Naive thymus-derived CD4-positive, alpha-beta T cell (primary cell): ENCODE measurements at regions of chr12 and their contacts with region 1.

Region 1: GRCh38 chr12:108562348-108563135 is at the start of gene ISCU:
- DNase-seq: peak; percentile 97 to 100 (median 99)
- ATAC-seq: peak; percentile 84
- H3K4me3 ChIP-seq: peak within 1 kb of the TSS; percentile 96
- H3K4me3 Mint-ChIP-seq: peak within 1 kb of the TSS; percentile 94 to 100 (median 100)
- H3K27ac ChIP-seq: peak within 1 kb of the TSS; percentile 98
- H3K27ac Mint-ChIP-seq: peak within 1 kb of the TSS; percentile 98 to 100 (median 99)
- H3K4me1 ChIP-seq: peaks cover 27 to 46% of the 10 kb centered on the region in 2 donors
- H3K4me1 Mint-ChIP-seq: peaks cover 26 to 76% (median 63%) of the 10 kb centered on the region in 7 donors
- H3K27me3 ChIP-seq: no peaks in the 10 kb centered on the region
- H3K27me3 Mint-ChIP-seq: no peaks in the 10 kb centered on the region
- total RNA-seq, gene ISCU: 51.7 to 212 (median 191) TPM

Region 2: DNA sequence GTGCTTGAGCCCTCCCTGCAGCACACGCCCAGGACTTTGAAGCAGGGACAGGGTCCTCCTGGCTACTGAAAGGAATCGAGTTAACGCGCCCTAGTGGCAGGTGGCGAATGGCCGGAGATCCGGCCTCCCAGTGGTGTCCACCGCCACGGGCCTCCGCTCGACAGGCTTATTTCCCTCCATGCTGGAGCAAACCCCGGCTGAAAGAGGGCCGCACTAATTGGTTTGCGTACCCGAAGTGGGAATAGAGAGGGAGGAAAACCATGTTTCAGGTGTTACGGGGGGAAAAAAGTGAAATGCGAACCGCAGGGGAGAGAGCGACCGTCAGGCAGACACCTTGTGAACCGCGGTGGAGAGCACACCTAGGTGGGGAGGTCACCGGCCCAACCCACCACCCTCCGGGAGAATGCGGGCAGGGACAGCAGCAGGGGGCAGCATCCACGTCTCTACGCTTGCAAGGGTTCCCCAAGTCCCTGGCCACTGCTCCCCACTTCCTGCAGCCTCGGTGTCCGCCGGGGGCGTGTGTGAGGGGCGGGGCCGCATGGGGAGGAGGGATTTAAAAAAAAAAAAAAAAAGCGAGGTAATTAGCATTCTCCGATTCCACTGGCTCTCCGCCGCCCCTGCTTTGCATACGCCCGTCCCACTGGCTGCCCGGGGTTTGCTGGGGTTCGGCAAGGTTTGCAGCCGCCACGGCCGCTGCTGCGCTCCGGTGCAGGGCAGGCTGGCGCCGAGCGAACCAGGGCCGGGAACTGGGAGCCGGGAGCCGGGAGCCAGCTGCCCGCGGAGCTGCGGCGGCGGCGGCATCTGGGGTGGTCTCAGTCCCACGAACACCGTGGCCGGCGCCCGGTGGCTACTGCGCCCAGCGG is 1244.6 kb before region 1 on chr12:
- CTCF ChIA-PET with region 1: no interaction called
- POLR2A ChIA-PET with region 1: no interaction called
- intact Hi-C with region 1: loop called in 1 of 2 experiments (anchors 2 kb)
- DNase-seq: peak; percentile 67 to 89 (median 85)
- ATAC-seq: peak; percentile 78
- H3K4me3 ChIP-seq: peak overlapping the region; percentile 66
- H3K4me3 Mint-ChIP-seq: peak overlapping the region; percentile 84 to 98 (median 88)
- H3K27ac ChIP-seq: peak overlapping the region; percentile 89
- H3K27ac Mint-ChIP-seq: peak overlapping the region; percentile 34 to 89 (median 62)
- H3K4me1 ChIP-seq: peaks cover 12 to 21% of the 10 kb centered on the region in 2 donors
- H3K4me1 Mint-ChIP-seq: peaks cover 11 to 38% (median 28%) of the 10 kb centered on the region in 7 donors
- H3K27me3 ChIP-seq: no peaks in the 10 kb centered on the region
- H3K27me3 Mint-ChIP-seq: peaks cover 0 to 39% (median 0%) of the 10 kb centered on the region in 5 donors

Region 3: DNA sequence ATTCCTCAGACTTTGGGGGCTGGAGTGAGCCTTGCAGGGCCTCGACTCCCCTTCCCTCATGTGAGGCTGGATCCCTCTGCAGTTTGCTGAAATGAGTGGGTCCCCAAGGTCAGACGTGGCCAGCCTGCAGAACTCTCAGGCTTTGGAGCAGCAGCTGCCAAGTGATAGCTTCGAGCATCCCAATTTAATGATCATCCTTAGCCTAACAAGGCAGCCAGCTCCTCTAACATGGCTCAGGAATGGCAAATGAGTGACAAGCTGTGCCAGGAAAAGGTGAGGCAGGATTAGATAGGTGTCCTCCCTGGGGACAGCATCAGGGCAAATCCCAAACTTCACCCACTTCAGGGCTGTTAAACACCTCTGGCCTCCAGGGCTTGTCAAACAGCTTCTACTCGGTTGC is 1007.6 kb before region 1 on chr12:
- CTCF ChIA-PET with region 1: no interaction called
- POLR2A ChIA-PET with region 1: no interaction called
- intact Hi-C with region 1: no loop called
- DNase-seq: no peak
- ATAC-seq: no peak
- H3K4me3 ChIP-seq: no peak overlapping the region
- H3K4me3 Mint-ChIP-seq: no peak overlapping the region
- H3K27ac ChIP-seq: no peak overlapping the region
- H3K27ac Mint-ChIP-seq: no peak overlapping the region
- H3K4me1 ChIP-seq: no peaks in the 10 kb centered on the region
- H3K4me1 Mint-ChIP-seq: peaks cover 0 to 13% (median 0%) of the 10 kb centered on the region in 7 donors
- H3K27me3 ChIP-seq: no peaks in the 10 kb centered on the region
- H3K27me3 Mint-ChIP-seq: no peaks in the 10 kb centered on the region

Region 4: DNA sequence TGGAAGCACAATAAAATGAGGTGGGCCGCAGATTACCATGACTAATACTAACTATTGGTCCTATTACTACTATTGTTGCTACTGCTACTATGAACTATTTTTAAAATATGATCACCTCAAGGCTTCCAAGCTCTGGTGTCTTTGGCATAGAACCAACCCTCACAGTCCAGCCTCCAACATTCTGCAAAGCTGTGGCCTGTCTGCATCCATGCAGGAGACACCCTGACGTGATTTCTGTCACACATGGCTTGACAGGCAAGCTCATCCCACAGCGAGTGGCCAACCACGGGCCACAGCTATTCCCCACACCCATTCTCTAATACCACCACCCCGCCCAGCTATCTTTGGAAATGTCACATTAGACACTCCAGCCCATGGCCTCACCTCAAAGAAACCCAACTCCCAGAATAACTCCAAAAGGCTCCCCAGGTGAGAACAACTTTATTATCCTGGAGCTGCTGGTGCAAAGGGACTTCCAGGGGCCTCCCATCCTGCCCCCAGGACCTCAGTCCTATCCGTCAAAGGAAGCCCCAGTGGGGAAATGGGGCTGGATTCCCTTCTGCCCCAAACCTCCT is 14.2 kb after region 1 on chr12:
- CTCF ChIA-PET with region 1: interaction called, 5 read pairs
- POLR2A ChIA-PET with region 1: interaction called, 10 read pairs
- intact Hi-C with region 1: no loop called
- DNase-seq: no peak
- ATAC-seq: no peak
- H3K4me3 ChIP-seq: no peak overlapping the region
- H3K4me3 Mint-ChIP-seq: peak overlapping the region in 2 of 10 donors; percentile 19 to 75
- H3K27ac ChIP-seq: no peak overlapping the region
- H3K27ac Mint-ChIP-seq: peak overlapping the region in 6 of 9 donors; percentile 54 to 91 (median 84)
- H3K4me1 ChIP-seq: peaks cover 0 to 24% of the 10 kb centered on the region in 2 donors
- H3K4me1 Mint-ChIP-seq: peaks cover 18 to 61% (median 54%) of the 10 kb centered on the region in 7 donors
- H3K27me3 ChIP-seq: no peaks in the 10 kb centered on the region
- H3K27me3 Mint-ChIP-seq: peaks cover 0 to 8% (median 0%) of the 10 kb centered on the region in 5 donors

Region 5: DNA sequence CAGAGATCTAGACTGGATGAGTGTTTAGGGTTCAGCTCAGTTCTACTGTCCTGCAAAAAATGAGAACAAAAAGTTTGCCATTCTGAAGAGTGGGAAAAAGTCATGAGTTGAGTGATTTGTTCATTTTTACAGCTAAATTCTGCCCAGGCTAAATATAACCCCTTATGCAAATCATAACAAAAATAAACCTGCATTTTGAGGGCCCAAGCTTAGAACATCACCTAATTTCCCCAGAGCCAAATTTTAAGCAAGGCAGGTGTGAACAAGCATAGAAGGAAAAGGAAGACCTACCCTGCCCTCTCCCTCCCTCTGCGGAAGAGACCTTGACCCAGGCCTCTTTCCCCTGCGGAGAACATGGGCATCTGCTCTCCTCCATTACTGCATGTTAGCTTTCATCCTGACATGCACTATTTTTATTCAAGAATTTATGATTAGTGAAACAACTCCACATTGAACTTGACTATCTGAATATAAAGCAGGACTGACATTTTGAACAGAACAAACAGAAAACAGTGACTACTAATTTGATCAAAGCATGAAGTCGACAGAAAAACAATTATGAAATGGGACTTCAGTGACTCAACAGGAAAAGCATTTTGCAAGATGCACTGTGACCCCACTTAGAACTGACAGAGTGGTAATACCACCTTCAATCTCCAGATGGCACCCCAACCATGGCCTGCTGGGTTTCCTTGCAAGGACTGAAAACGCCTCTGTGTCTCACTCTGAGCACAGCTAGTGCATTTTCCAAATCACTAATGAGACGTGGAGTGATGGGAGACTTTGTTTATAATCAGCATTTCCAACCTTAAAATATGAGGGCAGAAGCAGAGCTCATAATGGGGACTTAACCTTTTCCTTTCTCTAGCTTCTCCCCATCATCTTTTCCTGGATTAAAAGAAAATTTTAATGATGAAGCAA is 102.1 kb after region 1 on chr12:
- CTCF ChIA-PET with region 1: interaction called, 20 read pairs
- POLR2A ChIA-PET with region 1: interaction called, 5 read pairs
- intact Hi-C with region 1: loop called (anchors 1 kb)
- DNase-seq: peak; percentile 35 to 83 (median 78)
- ATAC-seq: peak; percentile 97
- H3K4me3 ChIP-seq: no peak overlapping the region
- H3K4me3 Mint-ChIP-seq: peak overlapping the region in 1 of 10 donors; percentile 24
- H3K27ac ChIP-seq: no peak overlapping the region
- H3K27ac Mint-ChIP-seq: peak overlapping the region in 8 of 9 donors; percentile 8 to 84 (median 75)
- H3K4me1 ChIP-seq: peaks cover 0 to 3% of the 10 kb centered on the region in 2 donors
- H3K4me1 Mint-ChIP-seq: peaks cover 5 to 17% (median 12%) of the 10 kb centered on the region in 7 donors
- H3K27me3 ChIP-seq: no peaks in the 10 kb centered on the region
- H3K27me3 Mint-ChIP-seq: no peaks in the 10 kb centered on the region

Region 6: GRCh38 chr12:108856428-108857157 is 294.1 kb after region 1 on chr12:
- CTCF ChIA-PET with region 1: no interaction called
- POLR2A ChIA-PET with region 1: interaction called, 7 read pairs
- intact Hi-C with region 1: loop called (anchors 1 kb)
- DNase-seq: peak; percentile 35 to 77 (median 54)
- ATAC-seq: peak; percentile 68
- H3K4me3 ChIP-seq: peak overlapping the region; percentile 84
- H3K4me3 Mint-ChIP-seq: peak overlapping the region; percentile 89 to 97 (median 94)
- H3K27ac ChIP-seq: peak overlapping the region; percentile 62
- H3K27ac Mint-ChIP-seq: peak overlapping the region; percentile 76 to 99 (median 92)
- H3K4me1 ChIP-seq: peaks cover 18 to 23% of the 10 kb centered on the region in 2 donors
- H3K4me1 Mint-ChIP-seq: peaks cover 26 to 56% (median 47%) of the 10 kb centered on the region in 7 donors
- H3K27me3 ChIP-seq: no peaks in the 10 kb centered on the region
- H3K27me3 Mint-ChIP-seq: peaks cover 0 to 2% (median 0%) of the 10 kb centered on the region in 5 donors

Region 7: GRCh38 chr12:109110988-109111495 is 548.5 kb after region 1 on chr12:
- CTCF ChIA-PET with region 1: no interaction called
- POLR2A ChIA-PET with region 1: no interaction called
- intact Hi-C with region 1: loop called in 1 of 2 experiments (anchors 5 kb)
- DNase-seq: peak; percentile 24 to 62 (median 48)
- ATAC-seq: peak; percentile 89
- H3K4me3 ChIP-seq: peak overlapping the region; percentile 46
- H3K4me3 Mint-ChIP-seq: peak overlapping the region; percentile 79 to 88 (median 84)
- H3K27ac ChIP-seq: peak overlapping the region; percentile 80
- H3K27ac Mint-ChIP-seq: peak overlapping the region; percentile 61 to 92 (median 77)
- H3K4me1 ChIP-seq: peaks cover 0 to 5% of the 10 kb centered on the region in 2 donors
- H3K4me1 Mint-ChIP-seq: peaks cover 5 to 46% (median 39%) of the 10 kb centered on the region in 7 donors
- H3K27me3 ChIP-seq: no peaks in the 10 kb centered on the region
- H3K27me3 Mint-ChIP-seq: no peaks in the 10 kb centered on the region

Region 8: GRCh38 chr12:109995686-109996482 is 1433.3 kb after region 1 on chr12 and contains the start of gene GIT2:
- CTCF ChIA-PET with region 1: no interaction called
- POLR2A ChIA-PET with region 1: no interaction called
- intact Hi-C with region 1: loop called in 1 of 2 experiments (anchors 5 kb)
- DNase-seq: peak; percentile 88 to 95 (median 93)
- ATAC-seq: peak; percentile 81
- H3K4me3 ChIP-seq: peak within 1 kb of the TSS; percentile 86
- H3K4me3 Mint-ChIP-seq: peak within 1 kb of the TSS; percentile 90 to 100 (median 96)
- H3K27ac ChIP-seq: peak within 1 kb of the TSS; percentile 84
- H3K27ac Mint-ChIP-seq: peak within 1 kb of the TSS; percentile 84 to 100 (median 96)
- H3K4me1 ChIP-seq: peaks cover 22 to 33% of the 10 kb centered on the region in 2 donors
- H3K4me1 Mint-ChIP-seq: peaks cover 42 to 77% (median 66%) of the 10 kb centered on the region in 7 donors
- H3K27me3 ChIP-seq: no peaks in the 10 kb centered on the region
- H3K27me3 Mint-ChIP-seq: no peaks in the 10 kb centered on the region
- total RNA-seq, gene GIT2: 70.3 to 128 (median 109) TPM